Naive thymus-derived CD4-positive, alpha-beta T cell (primary cell): ENCODE measurements at regions of chr12 and their contacts with region 1.

Region 1: DNA sequence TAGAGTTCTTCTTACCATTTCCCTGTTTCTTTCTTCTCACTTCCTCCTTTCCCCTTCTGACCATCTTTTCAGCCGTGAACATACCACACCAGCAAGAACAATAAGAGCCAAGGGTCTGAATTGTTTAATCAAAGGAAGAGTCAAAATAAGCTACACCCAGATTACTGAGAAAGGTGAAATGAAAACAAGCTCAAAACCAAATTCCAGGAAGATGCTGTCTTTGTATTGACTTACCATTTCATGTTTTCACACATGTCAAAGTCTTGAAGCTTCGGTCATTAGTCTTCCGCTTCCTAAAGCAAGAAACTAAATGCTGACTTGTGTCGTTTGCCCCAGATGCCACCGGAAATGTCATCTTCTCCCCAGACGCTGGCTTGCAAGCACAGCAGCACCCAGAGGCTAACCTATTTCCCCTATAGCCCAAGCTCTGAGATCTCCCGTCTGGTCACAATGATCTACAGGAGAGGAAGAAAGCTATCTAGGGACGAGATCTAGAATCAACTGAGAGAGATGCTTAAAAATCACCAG is 136.5 kb upstream of the AMIGO2 start:
- DNase-seq: peak in 8 of 9 donors; percentile 56 to 82 (median 72)
- ATAC-seq: peak; percentile 81
- H3K4me3 ChIP-seq: peak overlapping the region; percentile 80
- H3K4me3 Mint-ChIP-seq: peak overlapping the region; percentile 91 to 100 (median 98)
- H3K27ac ChIP-seq: peak overlapping the region; percentile 76
- H3K27ac Mint-ChIP-seq: peak overlapping the region; percentile 91 to 98 (median 96)
- H3K4me1 ChIP-seq: peaks cover 9 to 14% of the 10 kb centered on the region in 2 donors
- H3K4me1 Mint-ChIP-seq: peaks cover 6 to 52% (median 26%) of the 10 kb centered on the region in 7 donors
- H3K27me3 ChIP-seq: no peaks in the 10 kb centered on the region
- H3K27me3 Mint-ChIP-seq: peaks cover 0 to 4% (median 0%) of the 10 kb centered on the region in 5 donors

Region 2: GRCh38 chr12:46450279-46450748 is 765.9 kb before region 1 on chr12:
- CTCF ChIA-PET with region 1: no interaction called
- POLR2A ChIA-PET with region 1: no interaction called
- intact Hi-C with region 1: loop called in 1 of 2 experiments (anchors 10 kb)
- DNase-seq: no peak
- ATAC-seq: no peak
- H3K4me3 ChIP-seq: no peak overlapping the region
- H3K4me3 Mint-ChIP-seq: peak overlapping the region in 5 of 10 donors; percentile 1 to 75 (median 49)
- H3K27ac ChIP-seq: no peak overlapping the region
- H3K27ac Mint-ChIP-seq: peak overlapping the region in 6 of 9 donors; percentile 24 to 90 (median 75)
- H3K4me1 ChIP-seq: peaks cover 0 to 25% of the 10 kb centered on the region in 2 donors
- H3K4me1 Mint-ChIP-seq: peaks cover 35 to 62% (median 54%) of the 10 kb centered on the region in 7 donors
- H3K27me3 ChIP-seq: no peaks in the 10 kb centered on the region
- H3K27me3 Mint-ChIP-seq: peaks cover 0 to 3% (median 0%) of the 10 kb centered on the region in 5 donors

Region 3: GRCh38 chr12:47190271-47190750 is 25.9 kb before region 1 on chr12:
- CTCF ChIA-PET with region 1: interaction called, 6 read pairs
- POLR2A ChIA-PET with region 1: interaction called, 173 read pairs
- intact Hi-C with region 1: loop called in 1 of 2 experiments (anchors 1 kb)
- DNase-seq: no peak
- ATAC-seq: no peak
- H3K4me3 ChIP-seq: no peak overlapping the region
- H3K4me3 Mint-ChIP-seq: peak overlapping the region; percentile 42 to 87 (median 76)
- H3K27ac ChIP-seq: peak overlapping the region; percentile 61
- H3K27ac Mint-ChIP-seq: peak overlapping the region; percentile 81 to 98 (median 93)
- H3K4me1 ChIP-seq: peaks cover 52 to 77% of the 10 kb centered on the region in 2 donors
- H3K4me1 Mint-ChIP-seq: peaks cover 69 to 98% (median 93%) of the 10 kb centered on the region in 7 donors
- H3K27me3 ChIP-seq: no peaks in the 10 kb centered on the region
- H3K27me3 Mint-ChIP-seq: no peaks in the 10 kb centered on the region

Region 4: DNA sequence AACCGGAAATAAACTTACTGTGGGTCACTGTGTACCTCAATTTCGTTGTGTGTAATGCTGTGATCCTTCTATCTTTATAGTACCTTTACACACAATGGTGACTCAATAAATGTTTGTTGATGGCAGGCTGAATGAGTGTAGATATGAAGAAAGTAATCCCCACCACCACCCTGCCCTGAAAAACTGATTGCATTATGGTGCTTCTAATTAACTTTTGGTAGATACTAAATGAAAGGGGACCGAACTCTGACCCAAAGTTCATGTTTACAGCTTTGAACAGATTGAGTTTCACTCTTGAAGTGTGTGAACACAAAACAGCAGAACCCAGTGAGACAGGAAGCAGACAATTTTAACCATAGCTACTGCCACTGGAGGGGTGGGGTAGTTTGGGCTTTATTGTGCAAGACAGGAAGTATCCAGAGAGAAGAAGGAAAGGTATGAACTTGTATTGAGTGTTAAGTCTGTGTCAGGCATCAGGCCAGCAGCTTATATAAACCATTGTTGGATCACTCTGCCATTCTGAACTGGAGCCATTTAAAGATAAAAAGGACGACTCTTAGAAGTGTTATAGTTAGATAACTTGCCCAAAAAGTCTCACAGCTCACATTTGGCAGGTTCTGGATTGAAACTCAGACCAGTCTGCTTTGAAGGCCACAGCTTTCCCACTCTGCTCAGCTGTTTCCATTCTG is 60.6 kb after region 1 on chr12:
- CTCF ChIA-PET with region 1: interaction called, 5 read pairs
- POLR2A ChIA-PET with region 1: interaction called, 94 read pairs
- intact Hi-C with region 1: loop called (anchors 1 kb)
- DNase-seq: peak; percentile 12 to 89 (median 84)
- ATAC-seq: peak; percentile 97
- H3K4me3 ChIP-seq: peak overlapping the region; percentile 31
- H3K4me3 Mint-ChIP-seq: peak overlapping the region; percentile 51 to 83 (median 74)
- H3K27ac ChIP-seq: peak overlapping the region; percentile 69
- H3K27ac Mint-ChIP-seq: peak overlapping the region; percentile 90 to 98 (median 92)
- H3K4me1 ChIP-seq: peaks cover 28 to 73% of the 10 kb centered on the region in 2 donors
- H3K4me1 Mint-ChIP-seq: peaks cover 42 to 97% (median 90%) of the 10 kb centered on the region in 7 donors
- H3K27me3 ChIP-seq: no peaks in the 10 kb centered on the region
- H3K27me3 Mint-ChIP-seq: no peaks in the 10 kb centered on the region

Region 5: DNA sequence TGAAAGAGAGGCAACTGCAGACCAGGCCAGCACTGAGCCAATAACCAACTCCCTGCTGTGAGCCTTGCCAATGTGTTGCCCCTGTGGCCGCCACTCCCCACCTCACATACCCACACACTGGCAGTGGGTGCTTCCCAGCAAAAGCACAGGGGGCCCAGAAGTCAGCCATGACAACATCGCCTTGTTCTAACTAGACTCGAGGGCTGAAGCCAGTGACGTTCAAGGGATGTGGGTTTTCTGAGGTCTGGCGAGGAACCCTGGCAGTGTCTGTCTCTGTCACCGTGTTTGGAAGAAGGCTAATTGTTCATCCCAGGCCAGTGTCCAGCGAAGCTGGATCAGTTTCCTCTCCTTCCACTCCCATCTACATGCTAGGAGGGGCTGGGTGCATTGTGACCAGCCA is 175.4 kb after region 1 on chr12:
- CTCF ChIA-PET with region 1: no interaction called
- POLR2A ChIA-PET with region 1: interaction called, 11 read pairs
- intact Hi-C with region 1: loop called in 1 of 2 experiments (anchors 1 kb)
- DNase-seq: peak; percentile 22 to 78 (median 67)
- ATAC-seq: peak; percentile 91
- H3K4me3 ChIP-seq: no peak overlapping the region
- H3K4me3 Mint-ChIP-seq: peak overlapping the region; percentile 32 to 88 (median 69)
- H3K27ac ChIP-seq: peak overlapping the region; percentile 66
- H3K27ac Mint-ChIP-seq: peak overlapping the region; percentile 91 to 100 (median 97)
- H3K4me1 ChIP-seq: peaks cover 49 to 58% of the 10 kb centered on the region in 2 donors
- H3K4me1 Mint-ChIP-seq: peaks cover 44 to 79% (median 76%) of the 10 kb centered on the region in 7 donors
- H3K27me3 ChIP-seq: no peaks in the 10 kb centered on the region
- H3K27me3 Mint-ChIP-seq: no peaks in the 10 kb centered on the region

Region 6: DNA sequence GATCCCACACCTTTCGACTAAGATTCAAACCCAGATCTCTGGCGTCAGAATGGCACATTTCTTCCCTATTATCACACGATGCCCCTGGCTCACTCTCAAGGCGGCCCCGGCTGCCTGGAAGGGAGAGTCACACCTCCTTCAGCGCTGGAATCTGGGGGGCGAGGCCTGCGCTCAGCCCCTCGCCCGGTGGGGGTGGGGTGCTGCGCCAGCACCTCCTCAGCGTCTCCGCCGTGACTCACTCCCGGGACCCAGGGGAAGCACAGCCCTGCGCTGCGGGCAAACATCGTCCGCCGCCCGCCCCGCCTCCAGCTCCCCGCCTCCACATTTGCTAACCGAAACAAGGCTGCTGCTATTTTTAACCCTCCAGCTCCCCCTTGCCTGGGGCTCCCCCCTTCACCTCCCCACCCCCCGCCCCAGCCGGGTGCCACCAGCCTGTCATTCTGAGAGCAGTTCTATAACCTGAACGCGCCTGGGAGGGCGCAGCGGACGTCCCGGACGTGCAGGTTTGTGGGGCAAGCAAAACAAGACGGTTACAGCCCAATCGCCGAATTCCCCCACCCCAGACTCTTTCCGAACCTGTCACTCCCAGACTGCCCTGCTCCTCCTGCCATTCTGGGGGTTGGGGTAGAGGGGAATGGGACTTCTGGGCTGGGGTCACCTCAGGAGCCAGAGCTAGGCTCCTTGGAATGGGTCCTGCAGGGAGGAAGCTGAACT is 596.7 kb after region 1 on chr12:
- CTCF ChIA-PET with region 1: no interaction called
- POLR2A ChIA-PET with region 1: no interaction called
- intact Hi-C with region 1: loop called (anchors 5 to 10 kb)
- DNase-seq: peak; percentile 61 to 95 (median 85)
- ATAC-seq: peak; percentile 84
- H3K4me3 ChIP-seq: peak overlapping the region; percentile 80
- H3K4me3 Mint-ChIP-seq: peak overlapping the region; percentile 83 to 96 (median 88)
- H3K27ac ChIP-seq: peak overlapping the region; percentile 88
- H3K27ac Mint-ChIP-seq: peak overlapping the region; percentile 92 to 99 (median 97)
- H3K4me1 ChIP-seq: peaks cover 85 to 87% of the 10 kb centered on the region in 2 donors
- H3K4me1 Mint-ChIP-seq: peaks cover 77 to 100% (median 90%) of the 10 kb centered on the region in 7 donors
- H3K27me3 ChIP-seq: no peaks in the 10 kb centered on the region
- H3K27me3 Mint-ChIP-seq: no peaks in the 10 kb centered on the region